ENCODE measurements at regions of chr1 and their contacts with region 1.

Region 1: GRCh38 chr1:98398649-98399048 is 262.9 kb upstream of the SNX7 start:
- DNase-seq: no peak
- H3K4me3 ChIP-seq: no peak overlapping the region
- H3K27ac ChIP-seq: no peak overlapping the region
- H3K4me1 ChIP-seq: peaks cover 0 to 3% (median 0%) of the 10 kb centered on the region in 4 donors
- H3K27me3 ChIP-seq: no peaks in the 10 kb centered on the region
- CTCF ChIP-seq: no peak
- EP300 ChIP-seq: no peak
- POLR2A ChIP-seq: no peak

Region 2: DNA sequence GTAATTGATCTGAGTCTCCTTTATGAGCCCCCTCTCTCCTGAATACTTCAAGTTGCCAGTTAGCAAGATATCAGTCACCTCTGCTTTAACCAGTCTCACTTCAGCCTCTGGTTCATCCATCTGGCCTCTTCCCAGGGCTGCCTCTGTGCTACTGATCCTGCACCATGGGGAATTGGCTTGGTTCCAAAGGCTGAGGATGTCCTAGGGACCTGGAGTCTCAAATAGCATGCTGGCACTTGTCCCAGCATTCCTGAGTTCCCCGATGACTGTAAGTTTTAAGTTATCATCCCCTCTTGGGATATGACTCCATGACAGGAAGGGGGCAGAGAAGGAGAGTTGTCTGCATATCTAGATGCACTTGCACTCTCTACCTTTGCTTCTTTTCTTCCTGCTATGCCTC is 1425.0 kb before region 1 on chr1:
- in situ Hi-C with region 1: no loop called
- intact Hi-C with region 1: loop called (anchors 5 kb)
- DNase-seq: no peak
- H3K4me3 ChIP-seq: no peak overlapping the region
- H3K27ac ChIP-seq: no peak overlapping the region
- H3K4me1 ChIP-seq: no peaks in the 10 kb centered on the region
- H3K27me3 ChIP-seq: no peaks in the 10 kb centered on the region
- CTCF ChIP-seq: no peak
- EP300 ChIP-seq: no peak
- POLR2A ChIP-seq: no peak

Region 3: GRCh38 chr1:98210064-98210463 is 188.6 kb before region 1 on chr1:
- in situ Hi-C with region 1: no loop called
- intact Hi-C with region 1: no loop called
- DNase-seq: no peak
- H3K4me3 ChIP-seq: no peak overlapping the region
- H3K27ac ChIP-seq: no peak overlapping the region
- H3K4me1 ChIP-seq: no peaks in the 10 kb centered on the region
- H3K27me3 ChIP-seq: no peaks in the 10 kb centered on the region
- CTCF ChIP-seq: no peak
- EP300 ChIP-seq: no peak
- POLR2A ChIP-seq: no peak

Region 4: GRCh38 chr1:98251497-98251896 is 147.2 kb before region 1 on chr1:
- in situ Hi-C with region 1: no loop called
- intact Hi-C with region 1: no loop called
- DNase-seq: no peak
- H3K4me3 ChIP-seq: no peak overlapping the region
- H3K27ac ChIP-seq: no peak overlapping the region
- H3K4me1 ChIP-seq: no peaks in the 10 kb centered on the region
- H3K27me3 ChIP-seq: no peaks in the 10 kb centered on the region
- CTCF ChIP-seq: no peak
- EP300 ChIP-seq: no peak
- POLR2A ChIP-seq: no peak

Region 5: GRCh38 chr1:98369463-98369862 is 29.2 kb before region 1 on chr1:
- in situ Hi-C with region 1: no loop called
- intact Hi-C with region 1: loop called (anchors 1 kb)
- DNase-seq: no peak
- H3K4me3 ChIP-seq: no peak overlapping the region
- H3K27ac ChIP-seq: no peak overlapping the region
- H3K4me1 ChIP-seq: peaks cover 0 to 9% (median 2%) of the 10 kb centered on the region in 4 donors
- H3K27me3 ChIP-seq: no peaks in the 10 kb centered on the region
- CTCF ChIP-seq: no peak
- EP300 ChIP-seq: no peak
- POLR2A ChIP-seq: no peak

Region 6: GRCh38 chr1:98503771-98504170 is 105.1 kb after region 1 on chr1:
- in situ Hi-C with region 1: no loop called
- intact Hi-C with region 1: no loop called
- DNase-seq: no peak
- H3K4me3 ChIP-seq: no peak overlapping the region
- H3K27ac ChIP-seq: no peak overlapping the region
- H3K4me1 ChIP-seq: no peaks in the 10 kb centered on the region
- H3K27me3 ChIP-seq: no peaks in the 10 kb centered on the region
- CTCF ChIP-seq: no peak
- EP300 ChIP-seq: no peak
- POLR2A ChIP-seq: no peak

Region 7: GRCh38 chr1:98688110-98688739 is 289.6 kb after region 1 on chr1:
- in situ Hi-C with region 1: no loop called
- intact Hi-C with region 1: no loop called
- DNase-seq: no peak
- H3K4me3 ChIP-seq: no peak overlapping the region
- H3K27ac ChIP-seq: no peak overlapping the region
- H3K4me1 ChIP-seq: no peaks in the 10 kb centered on the region
- H3K27me3 ChIP-seq: no peaks in the 10 kb centered on the region
- CTCF ChIP-seq: no peak
- EP300 ChIP-seq: no peak
- POLR2A ChIP-seq: no peak